ENCODE measurements at regions of chr7 and their contacts with region 1.

Region 1: GRCh38 chr7:39465055-39465929 is 100.9 kb upstream of the YAE1 start:
- DNase-seq: peak in 7 of 9 donors; percentile 7 to 36 (median 27)
- ATAC-seq: peak; percentile 57
- H3K4me3 ChIP-seq: no peak overlapping the region
- H3K4me3 Mint-ChIP-seq: peak overlapping the region in 1 of 10 donors; percentile 26
- H3K27ac ChIP-seq: no peak overlapping the region
- H3K27ac Mint-ChIP-seq: no peak overlapping the region
- H3K4me1 ChIP-seq: no peaks in the 10 kb centered on the region
- H3K4me1 Mint-ChIP-seq: peaks cover 0 to 6% (median 5%) of the 10 kb centered on the region in 7 donors
- H3K27me3 ChIP-seq: no peaks in the 10 kb centered on the region
- H3K27me3 Mint-ChIP-seq: peaks cover 7 to 48% (median 21%) of the 10 kb centered on the region in 5 donors

Region 2: GRCh38 chr7:38932509-38933168 is 532.7 kb before region 1 on chr7:
- CTCF ChIA-PET with region 1: no interaction called
- POLR2A ChIA-PET with region 1: no interaction called
- intact Hi-C with region 1: loop called (anchors 2 kb)
- DNase-seq: peak in 3 of 9 donors; percentile 9 to 38 (median 19)
- ATAC-seq: peak; percentile 41
- H3K4me3 ChIP-seq: no peak overlapping the region
- H3K4me3 Mint-ChIP-seq: no peak overlapping the region
- H3K27ac ChIP-seq: no peak overlapping the region
- H3K27ac Mint-ChIP-seq: no peak overlapping the region
- H3K4me1 ChIP-seq: no peaks in the 10 kb centered on the region
- H3K4me1 Mint-ChIP-seq: peaks cover 0 to 8% (median 0%) of the 10 kb centered on the region in 7 donors
- H3K27me3 ChIP-seq: no peaks in the 10 kb centered on the region
- H3K27me3 Mint-ChIP-seq: peaks cover 7 to 20% (median 16%) of the 10 kb centered on the region in 5 donors

Region 3: DNA sequence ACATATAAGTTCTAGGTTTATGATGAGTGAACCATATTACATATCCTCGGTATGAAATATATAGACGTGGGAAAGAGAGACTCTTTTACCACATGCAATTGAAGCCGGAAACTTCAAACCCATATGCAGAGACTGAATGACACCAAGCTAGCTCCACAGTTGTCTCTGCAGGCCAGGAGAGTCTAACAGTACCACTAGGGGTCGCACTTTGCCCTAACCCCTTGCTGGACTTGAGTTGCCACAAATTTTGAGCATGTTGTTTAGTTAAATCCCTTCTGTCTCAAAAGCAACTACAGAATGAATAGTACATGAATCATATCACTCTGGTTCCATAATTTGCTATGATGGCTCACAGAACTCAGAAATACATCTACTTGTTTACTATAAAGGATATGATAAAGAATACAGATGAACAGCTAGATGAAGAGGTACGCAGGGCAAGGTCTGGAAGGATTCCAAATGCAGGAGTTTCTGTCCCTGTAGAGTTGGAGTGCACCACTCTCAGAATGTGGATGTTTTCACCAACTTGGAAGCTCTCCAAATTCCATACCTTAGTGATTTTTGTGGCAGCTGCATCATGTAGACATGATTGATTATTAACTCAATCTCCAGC is 11.4 kb before region 1 on chr7:
- CTCF ChIA-PET with region 1: interaction called, 14 read pairs
- POLR2A ChIA-PET with region 1: no interaction called
- intact Hi-C with region 1: no loop called
- DNase-seq: peak in 7 of 9 donors; percentile 27 to 53 (median 46)
- ATAC-seq: peak; percentile 74
- H3K4me3 ChIP-seq: no peak overlapping the region
- H3K4me3 Mint-ChIP-seq: no peak overlapping the region
- H3K27ac ChIP-seq: no peak overlapping the region
- H3K27ac Mint-ChIP-seq: no peak overlapping the region
- H3K4me1 ChIP-seq: no peaks in the 10 kb centered on the region
- H3K4me1 Mint-ChIP-seq: no peaks in the 10 kb centered on the region
- H3K27me3 ChIP-seq: no peaks in the 10 kb centered on the region
- H3K27me3 Mint-ChIP-seq: peaks cover 4 to 15% (median 12%) of the 10 kb centered on the region in 5 donors